Pancreas (tissue), 10 donors: ENCODE measurements at regions of chr19 and their contacts with region 1.

Region 1: DNA sequence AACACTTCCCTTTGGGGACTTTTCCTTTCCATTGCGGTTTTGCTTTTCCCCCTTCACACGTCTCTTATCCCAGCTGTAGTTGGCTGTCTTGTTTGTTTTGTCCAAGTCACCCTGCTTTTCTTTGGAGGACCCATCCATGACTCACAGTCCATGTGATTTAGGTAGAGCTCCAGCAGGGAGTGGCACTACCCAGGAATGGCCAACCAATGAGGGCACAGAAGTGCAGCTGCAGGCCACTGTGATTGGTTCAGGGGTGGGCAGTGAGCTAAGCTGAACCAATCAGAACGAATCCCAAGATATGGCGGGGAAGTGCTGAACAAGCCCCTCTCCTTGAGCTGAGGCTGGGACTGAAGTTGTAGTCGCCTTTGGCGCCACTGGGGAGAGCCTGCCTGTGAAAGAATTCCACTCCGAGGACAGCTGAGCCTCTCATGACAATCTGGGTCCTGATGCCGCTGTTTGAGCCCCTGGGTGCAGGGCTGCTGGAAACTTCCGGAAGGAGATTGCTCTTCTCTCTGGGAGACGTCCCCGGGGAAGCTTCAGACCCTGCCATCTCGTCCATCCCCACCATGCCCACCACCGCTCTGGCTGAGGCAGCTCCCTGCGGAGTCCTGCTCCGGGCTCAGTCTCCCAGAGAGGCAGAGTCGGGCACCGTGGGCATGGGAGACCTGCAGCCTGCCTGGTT is 62.9 kb upstream of the URI1 start:
- DNase-seq: no peak
- ATAC-seq: peak in 1 of 4 donors; percentile 46
- H3K4me3 ChIP-seq: no peak overlapping the region
- H3K27ac ChIP-seq: no peak overlapping the region
- H3K4me1 ChIP-seq: no peaks in the 10 kb centered on the region
- H3K27me3 ChIP-seq: peaks cover 0 to 5% (median 0%) of the 10 kb centered on the region in 4 donors
- CTCF ChIP-seq: no peak

Region 2: DNA sequence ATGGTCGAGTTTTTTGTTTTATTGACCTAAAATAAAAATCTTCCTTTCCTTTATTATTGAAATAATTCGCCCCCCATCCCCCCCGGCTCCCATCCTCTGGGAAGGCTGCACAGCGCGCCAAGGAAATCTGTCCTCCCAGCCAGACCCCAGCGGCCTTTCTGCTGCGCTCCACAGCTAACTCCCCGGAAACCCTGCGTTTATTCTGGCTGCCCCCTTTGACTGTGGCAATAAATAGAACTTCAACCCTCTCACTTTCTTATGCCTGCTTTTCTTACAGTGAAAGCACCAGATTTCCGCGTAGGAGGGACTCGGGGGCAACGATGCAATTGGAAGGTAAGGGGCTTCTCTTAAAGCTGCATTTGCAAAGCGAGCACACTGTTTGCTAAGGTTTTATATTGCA is 154.4 kb before region 1 on chr19:
- intact Hi-C with region 1: loop called in 1 of 3 experiments (anchors 5 kb)
- DNase-seq: no peak
- ATAC-seq: no peak
- H3K4me3 ChIP-seq: peak overlapping the region in 1 of 4 donors; percentile 30
- H3K27ac ChIP-seq: no peak overlapping the region
- H3K4me1 ChIP-seq: peaks cover 0 to 4% (median 0%) of the 10 kb centered on the region in 3 donors
- H3K27me3 ChIP-seq: peaks cover 0 to 19% (median 0%) of the 10 kb centered on the region in 4 donors
- CTCF ChIP-seq: no peak

Region 3: DNA sequence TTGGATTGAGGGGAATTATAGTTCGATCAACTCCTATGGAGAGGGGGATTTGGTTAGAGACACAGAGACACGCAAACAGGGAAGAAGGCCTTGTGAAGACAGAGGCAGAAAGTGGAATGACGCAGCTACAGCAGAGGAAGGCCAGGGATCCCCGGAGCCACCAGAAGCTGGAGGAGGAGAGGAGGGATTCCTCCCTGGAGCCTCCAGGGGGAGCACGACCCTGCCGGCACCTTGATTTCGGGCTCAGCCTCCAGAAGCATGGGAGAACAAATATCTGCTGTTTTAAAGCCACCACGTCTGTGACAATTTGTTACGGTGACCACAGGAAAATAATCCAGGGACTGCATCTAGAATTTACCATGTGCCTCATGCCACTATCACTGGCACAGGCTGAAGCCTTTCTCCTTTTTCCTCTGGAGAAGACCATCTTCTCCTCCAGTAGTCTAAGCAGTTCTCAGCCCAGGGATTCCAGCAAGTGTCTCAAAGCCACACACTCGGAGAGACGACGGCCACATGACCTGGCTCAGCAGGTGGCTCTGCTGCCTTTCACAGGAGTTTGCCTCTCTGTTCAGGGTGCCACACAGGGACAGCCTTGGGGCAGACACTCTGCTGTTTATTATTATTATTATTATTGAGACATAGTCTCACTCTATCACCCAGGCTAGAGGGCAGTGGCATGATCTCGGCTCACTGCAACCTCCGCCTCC is 107.3 kb before region 1 on chr19:
- intact Hi-C with region 1: loop called (anchors 5 to 10 kb)
- DNase-seq: peak; percentile 40 to 85 (median 67)
- ATAC-seq: peak; percentile 80 to 98 (median 96)
- H3K4me3 ChIP-seq: no peak overlapping the region
- H3K27ac ChIP-seq: no peak overlapping the region
- H3K4me1 ChIP-seq: no peaks in the 10 kb centered on the region
- H3K27me3 ChIP-seq: no peaks in the 10 kb centered on the region
- CTCF ChIP-seq: peak; percentile 45 to 78 (median 68)